ENCODE measurements at regions of chr15 and their contacts with region 1.

Region 1: DNA sequence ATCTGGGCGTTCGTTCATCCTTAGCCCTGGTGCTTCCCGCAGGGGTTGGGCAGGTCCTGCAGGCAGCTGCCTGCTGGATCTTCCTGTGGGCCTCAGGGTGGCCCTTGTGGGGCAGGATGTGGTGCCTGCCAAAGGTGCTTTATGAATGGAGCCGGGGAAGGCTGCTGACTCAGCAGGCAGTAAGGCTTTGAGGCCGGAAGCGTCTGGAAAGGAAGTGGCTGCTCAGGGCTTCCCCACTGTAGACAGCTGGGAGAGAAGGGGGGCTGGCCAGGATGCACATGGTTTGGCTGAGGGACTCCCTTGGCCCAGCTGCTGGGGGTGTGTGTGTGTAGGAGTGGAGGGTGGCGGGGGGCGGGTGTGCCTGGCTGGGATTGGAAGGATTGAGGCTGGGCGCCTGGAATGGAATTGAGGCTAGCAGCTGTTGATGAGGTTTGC is 12.9 kb downstream of the CD276 start:
- DNase-seq: no peak
- H3K4me3 Mint-ChIP-seq: no peak overlapping the region
- H3K27ac Mint-ChIP-seq: no peak overlapping the region
- H3K4me1 Mint-ChIP-seq: peaks cover 10% of the 10 kb centered on the region
- H3K27me3 Mint-ChIP-seq: no peaks in the 10 kb centered on the region
- CTCF ChIP-seq: no peak

Region 2: GRCh38 chr15:73305331-73306211 is 391.5 kb before region 1 on chr15:
- CTCF ChIA-PET with region 1: interaction called, 8 read pairs
- intact Hi-C with region 1: loop called (anchors 2 kb)
- DNase-seq: peak; percentile 64
- H3K4me3 Mint-ChIP-seq: no peak overlapping the region
- H3K27ac Mint-ChIP-seq: no peak overlapping the region
- H3K4me1 Mint-ChIP-seq: no peaks in the 10 kb centered on the region
- H3K27me3 Mint-ChIP-seq: no peaks in the 10 kb centered on the region
- CTCF ChIP-seq: peak; percentile 54

Region 3: DNA sequence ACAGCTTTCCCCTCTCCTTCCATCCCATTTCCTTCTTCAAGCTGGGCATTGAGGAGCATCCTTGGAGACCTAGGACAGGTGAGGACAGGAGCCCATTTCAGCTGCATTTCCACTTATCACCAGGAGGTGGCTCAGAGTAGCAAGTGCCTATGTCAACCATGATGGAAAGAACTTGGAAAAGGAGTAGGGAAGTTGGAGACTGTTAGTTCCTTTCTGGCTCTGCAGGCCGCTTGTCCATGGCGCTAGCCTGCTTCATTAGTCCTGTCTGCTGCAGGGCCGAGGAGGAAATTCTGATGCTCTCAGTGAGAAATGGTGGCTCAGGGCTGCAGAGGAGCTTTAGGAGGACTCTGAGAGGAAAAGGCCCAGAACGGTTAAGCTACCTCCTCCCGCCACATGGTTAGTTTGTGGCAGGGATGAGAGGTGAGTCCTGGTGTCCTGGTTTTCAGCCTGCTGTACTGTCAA is 19.9 kb before region 1 on chr15:
- CTCF ChIA-PET with region 1: interaction called, 27 read pairs
- intact Hi-C with region 1: loop called (anchors 1 kb)
- DNase-seq: peak; percentile 79
- H3K4me3 Mint-ChIP-seq: no peak overlapping the region
- H3K27ac Mint-ChIP-seq: no peak overlapping the region
- H3K4me1 Mint-ChIP-seq: no peaks in the 10 kb centered on the region
- H3K27me3 Mint-ChIP-seq: peaks cover 28% of the 10 kb centered on the region
- CTCF ChIP-seq: peak; percentile 88

Region 4: DNA sequence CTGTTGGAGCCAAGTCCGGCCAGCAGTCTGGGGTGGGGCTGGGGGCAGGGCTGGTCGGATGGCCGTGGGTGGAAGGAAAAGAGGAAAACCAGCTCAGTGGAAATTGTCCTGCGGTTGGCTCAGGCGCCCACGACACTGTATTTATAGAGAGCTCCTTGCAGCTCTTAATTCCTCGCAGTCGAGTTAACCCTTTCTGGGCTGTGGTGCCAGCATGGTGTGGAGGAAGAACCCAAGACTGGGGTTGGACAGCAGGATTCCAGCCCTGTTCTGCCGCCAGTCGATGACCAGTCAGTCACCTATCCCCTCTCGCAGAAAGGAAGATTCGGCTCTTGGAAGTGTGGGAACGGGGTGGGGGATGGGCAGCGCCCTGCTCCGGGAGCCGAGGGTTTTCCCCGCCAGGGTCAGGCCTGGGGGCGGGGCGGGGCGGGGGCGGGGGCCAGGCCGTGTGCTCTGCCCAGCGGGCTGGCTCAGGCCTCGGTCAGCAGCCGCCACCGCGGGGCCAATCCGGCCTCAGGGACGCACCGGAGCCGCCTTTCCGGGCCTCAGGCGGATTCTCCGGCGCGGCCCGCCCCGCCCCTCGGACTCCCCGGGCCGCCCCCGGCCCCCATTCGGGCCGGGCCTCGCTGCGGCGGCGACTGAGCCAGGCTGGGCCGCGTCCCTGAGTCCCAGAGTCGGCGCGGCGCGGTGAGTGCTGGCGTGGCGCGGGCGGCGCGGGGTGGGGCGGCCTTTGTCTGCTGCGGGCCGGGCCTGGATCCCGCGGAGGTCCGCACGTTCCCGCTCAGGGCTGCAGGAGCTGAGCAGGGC is 13.1 kb before region 1 on chr15 and contains the start of gene CD276:
- CTCF ChIA-PET with region 1: interaction called, 27 read pairs
- intact Hi-C with region 1: no loop called
- DNase-seq: peak; percentile 83
- H3K4me3 Mint-ChIP-seq: peak within 1 kb of the TSS; percentile 88
- H3K27ac Mint-ChIP-seq: peak within 1 kb of the TSS; percentile 29
- H3K4me1 Mint-ChIP-seq: peaks cover 35% of the 10 kb centered on the region
- H3K27me3 Mint-ChIP-seq: peaks cover 25% of the 10 kb centered on the region
- CTCF ChIP-seq: peak; percentile 31
- total RNA-seq, gene CD276: 83.7 and 84.6 TPM in 2 replicates